ENCODE measurements at regions of chrX and their contacts with region 1.

Region 1: DNA sequence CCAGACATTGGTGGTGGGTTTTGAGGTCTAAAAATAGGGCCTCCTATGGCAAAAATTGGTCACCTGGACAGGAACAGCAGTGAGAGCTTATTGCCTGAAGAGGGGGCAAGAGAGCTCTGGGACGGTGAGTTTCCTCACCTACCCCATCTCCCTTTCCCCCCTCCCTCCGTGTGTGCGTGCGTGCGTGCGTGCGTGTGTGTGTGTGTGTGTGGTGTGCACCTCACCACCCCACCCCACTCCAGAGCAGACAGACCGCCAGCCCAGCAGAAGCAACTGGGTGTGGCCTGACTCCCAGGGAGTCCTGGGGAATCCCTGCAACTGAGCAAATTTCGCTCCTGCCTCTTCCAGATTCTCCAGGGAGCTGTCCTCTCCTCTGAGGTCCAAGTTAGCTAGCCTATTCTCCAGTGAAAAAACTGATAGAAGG is 44.7 kb downstream of the PRPS1 start:
- DNase-seq: peak; percentile 61 to 80 (median 72)
- ATAC-seq: peak; percentile 62
- H3K4me3 ChIP-seq: no peak overlapping the region
- H3K27ac ChIP-seq: no peak overlapping the region
- H3K4me1 ChIP-seq: peaks cover 21 to 34% of the 10 kb centered on the region in 2 experiments; a peak in 4 of 5 replicates
- H3K27me3 ChIP-seq: no peaks in the 10 kb centered on the region
- CTCF ChIP-seq: peak; percentile 76 to 84 (median 76)
- EP300 ChIP-seq: 0 out of 2 replicates have a peak, but pooled peaks have one; percentile 5
- POLR2A ChIP-seq: no peak
- RAD21 ChIP-seq: peak; percentile 59 to 84

Region 2: GRCh38 chrX:107710617-107711391 is 37.8 kb after region 1 on chrX:
- CTCF ChIA-PET with region 1: no interaction called
- POLR2A ChIA-PET with region 1: interaction called, 9 read pairs
- in situ Hi-C with region 1: loop called (anchors 5 kb)
- intact Hi-C with region 1: no loop called
- DNase-seq: peak; percentile 45 to 76 (median 60)
- ATAC-seq: peak; percentile 91
- H3K4me3 ChIP-seq: no peak overlapping the region
- H3K27ac ChIP-seq: peak overlapping the region; percentile 68; the same call in 2 of the 3 replicates
- H3K4me1 ChIP-seq: peaks cover 6 to 9% of the 10 kb centered on the region in 2 experiments; a peak in 4 of 5 replicates
- H3K27me3 ChIP-seq: no peaks in the 10 kb centered on the region; a peak in 1 of 5 replicates
- CTCF ChIP-seq: no peak
- EP300 ChIP-seq: peak; percentile 65
- POLR2A ChIP-seq: no peak
- RAD21 ChIP-seq: no peak

Region 3: DNA sequence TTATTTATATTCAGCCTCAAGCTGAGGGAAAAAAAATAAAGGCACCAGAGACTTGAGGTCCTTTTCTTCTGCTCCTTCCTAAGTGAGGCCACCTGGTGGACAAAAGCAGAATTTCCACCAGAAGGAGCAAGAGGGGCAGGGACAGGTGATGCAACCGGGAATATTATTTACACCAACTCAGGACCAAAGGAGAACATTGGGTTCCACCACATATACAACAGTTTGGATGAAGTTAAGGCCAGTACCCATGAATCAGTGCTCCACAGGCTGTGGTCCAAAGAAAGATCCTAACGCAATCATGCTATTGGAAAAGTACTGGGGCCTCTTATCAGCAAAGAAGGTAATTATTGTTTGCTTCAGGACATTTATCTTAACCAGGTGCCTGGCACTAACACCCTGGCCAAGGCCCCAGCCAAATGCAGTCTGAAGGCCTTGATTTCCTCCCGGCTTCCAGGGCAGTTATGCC is 45.2 kb after region 1 on chrX:
- CTCF ChIA-PET with region 1: interaction called, 21 read pairs
- POLR2A ChIA-PET with region 1: interaction called, 5 read pairs
- in situ Hi-C with region 1: loop called (anchors 5 kb)
- intact Hi-C with region 1: loop called (anchors 1 kb)
- DNase-seq: peak; percentile 68 to 77 (median 73)
- ATAC-seq: peak; percentile 74
- H3K4me3 ChIP-seq: no peak overlapping the region
- H3K27ac ChIP-seq: no peak overlapping the region; the same call in 2 of the 3 replicates
- H3K4me1 ChIP-seq: peaks cover 12 to 23% of the 10 kb centered on the region in 2 experiments; a peak in 4 of 5 replicates
- H3K27me3 ChIP-seq: no peaks in the 10 kb centered on the region
- CTCF ChIP-seq: peak; percentile 71 to 77 (median 76)
- EP300 ChIP-seq: peak; percentile 44; the same call in 1 of the 2 replicates
- POLR2A ChIP-seq: no peak
- RAD21 ChIP-seq: peak; percentile 62 to 76

Region 4: GRCh38 chrX:107731831-107732502 is 59.0 kb after region 1 on chrX:
- CTCF ChIA-PET with region 1: no interaction called
- POLR2A ChIA-PET with region 1: interaction called, 3 read pairs
- in situ Hi-C with region 1: no loop called
- intact Hi-C with region 1: loop called (anchors 5 kb)
- DNase-seq: peak; percentile 70 to 85 (median 72)
- ATAC-seq: peak; percentile 75
- H3K4me3 ChIP-seq: no peak overlapping the region
- H3K27ac ChIP-seq: no peak overlapping the region; the same call in 2 of the 3 replicates
- H3K4me1 ChIP-seq: peaks cover 15 to 41% of the 10 kb centered on the region in 2 experiments; a peak in 4 of 5 replicates
- H3K27me3 ChIP-seq: no peaks in the 10 kb centered on the region
- CTCF ChIP-seq: no peak
- EP300 ChIP-seq: 0 out of 2 replicates have a peak, but pooled peaks have one; percentile 19
- POLR2A ChIP-seq: no peak
- RAD21 ChIP-seq: no peak

Region 5: GRCh38 chrX:107741404-107741790 is 68.4 kb after region 1 on chrX:
- CTCF ChIA-PET with region 1: no interaction called
- POLR2A ChIA-PET with region 1: no interaction called
- in situ Hi-C with region 1: no loop called
- intact Hi-C with region 1: loop called (anchors 1 kb)
- DNase-seq: no peak
- ATAC-seq: no peak; the same call in 2 of the 3 replicates
- H3K4me3 ChIP-seq: no peak overlapping the region
- H3K27ac ChIP-seq: no peak overlapping the region
- H3K4me1 ChIP-seq: peaks cover 12 to 18% of the 10 kb centered on the region in 2 experiments; a peak in 4 of 5 replicates
- H3K27me3 ChIP-seq: 0 out of 5 replicates have a peak, but pooled peaks cover 0 to 11% of the 10 kb centered on the region in 2 experiments
- CTCF ChIP-seq: no peak
- EP300 ChIP-seq: no peak
- POLR2A ChIP-seq: no peak
- RAD21 ChIP-seq: no peak